Right ventricle myocardium inferior (tissue), 1 donor: ENCODE measurements at regions of chr10 and their contacts with region 1.

Region 1: DNA sequence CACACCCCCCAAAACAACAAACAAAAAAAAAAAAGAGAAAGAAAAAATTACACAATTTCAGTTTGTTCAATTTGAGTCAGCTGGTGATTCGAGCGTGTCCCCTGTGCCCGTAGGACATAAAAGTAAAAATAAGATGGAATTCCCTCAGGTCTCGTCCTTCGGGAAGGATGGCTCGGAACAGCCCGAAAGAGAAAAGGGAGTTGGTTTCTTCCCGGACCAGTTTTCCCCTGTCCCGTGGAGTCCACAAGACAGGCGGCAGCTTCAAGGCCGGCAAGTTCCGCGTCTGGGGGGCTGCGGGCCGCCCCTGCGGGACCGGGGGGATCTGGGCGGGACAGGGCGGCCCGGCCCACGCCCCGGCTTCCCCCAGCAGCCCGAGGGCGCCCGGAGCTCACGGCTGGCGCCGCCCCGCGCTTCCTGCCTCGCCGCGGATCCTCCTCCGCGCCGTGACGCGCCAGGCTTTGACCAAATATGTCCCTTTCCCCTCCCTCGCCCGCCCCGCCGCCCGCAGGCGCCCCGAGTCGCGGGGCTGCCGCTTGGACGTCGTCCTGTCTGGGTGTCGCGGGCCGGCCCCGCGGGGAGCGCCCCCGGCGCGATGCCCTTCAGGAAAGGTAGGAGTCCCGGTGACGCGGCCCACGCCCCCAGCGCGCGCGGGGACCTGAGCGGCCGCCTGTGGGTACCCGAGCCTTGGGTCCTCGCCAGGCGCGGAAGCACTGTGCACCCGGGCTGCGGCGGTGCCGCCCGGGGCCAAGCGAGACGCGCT is 55.8 kb downstream of the RBM17 start:
- DNase-seq: peak; percentile 98
- ATAC-seq: peak; percentile 94

Region 2: GRCh38 chr10:6062101-6062771 is 82.3 kb before region 1 on chr10 and contains the start of gene IL2RA:
- intact Hi-C with region 1: no loop called
- DNase-seq: peak; percentile 63
- ATAC-seq: no peak
- total RNA-seq, gene IL2RA: 3.8 TPM

Region 3: DNA sequence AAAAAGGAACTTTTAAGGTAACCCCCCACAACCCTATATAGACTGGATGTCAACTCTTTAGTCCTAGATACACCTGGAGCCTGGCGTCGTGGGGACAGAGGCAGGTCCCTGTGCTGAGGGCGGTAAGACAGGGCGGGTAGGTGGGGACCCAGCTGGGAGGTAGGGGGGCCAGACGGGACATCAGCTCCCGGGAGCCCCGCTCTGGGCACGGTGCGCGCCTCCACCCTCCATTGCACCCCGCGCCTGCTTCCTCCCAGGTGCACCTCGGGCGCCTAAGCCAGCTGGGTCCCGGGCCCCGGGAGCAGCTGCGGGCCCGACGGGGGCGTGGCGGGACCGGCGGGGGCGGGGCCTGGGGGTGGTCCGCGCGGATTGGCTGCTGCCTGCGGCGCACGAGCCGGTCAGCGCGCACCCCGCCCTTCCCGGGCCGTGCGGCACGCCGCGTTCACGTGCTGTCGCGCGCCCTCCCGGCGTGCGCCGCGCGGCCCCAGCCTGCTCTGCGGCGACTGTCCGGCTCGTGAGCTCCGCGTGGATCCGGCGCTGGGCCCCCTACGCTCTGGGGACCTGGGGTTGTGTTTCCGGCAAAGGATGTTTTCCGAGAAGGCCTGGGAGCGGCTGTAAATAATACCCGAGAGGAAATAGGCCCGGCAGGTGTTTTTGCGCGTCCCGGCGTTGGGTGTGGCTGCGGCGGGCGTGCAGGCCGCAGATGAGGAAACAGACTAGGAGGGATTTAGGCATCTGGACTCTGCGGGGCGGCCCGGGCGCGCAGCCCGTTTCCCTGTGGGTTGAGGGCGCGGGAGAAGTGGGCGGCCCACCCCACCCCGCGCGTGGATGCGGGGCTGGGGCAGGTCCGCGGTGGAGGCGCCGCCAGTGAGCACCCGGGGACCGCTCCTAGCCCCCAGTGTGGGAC is 19.0 kb after region 1 on chr10:
- intact Hi-C with region 1: loop called (anchors 2 kb)
- DNase-seq: peak; percentile 95
- ATAC-seq: peak; percentile 99